Breast epithelium (tissue), 4 donors: ENCODE measurements at regions of chr12 and their contacts with region 1.

Region 1: DNA sequence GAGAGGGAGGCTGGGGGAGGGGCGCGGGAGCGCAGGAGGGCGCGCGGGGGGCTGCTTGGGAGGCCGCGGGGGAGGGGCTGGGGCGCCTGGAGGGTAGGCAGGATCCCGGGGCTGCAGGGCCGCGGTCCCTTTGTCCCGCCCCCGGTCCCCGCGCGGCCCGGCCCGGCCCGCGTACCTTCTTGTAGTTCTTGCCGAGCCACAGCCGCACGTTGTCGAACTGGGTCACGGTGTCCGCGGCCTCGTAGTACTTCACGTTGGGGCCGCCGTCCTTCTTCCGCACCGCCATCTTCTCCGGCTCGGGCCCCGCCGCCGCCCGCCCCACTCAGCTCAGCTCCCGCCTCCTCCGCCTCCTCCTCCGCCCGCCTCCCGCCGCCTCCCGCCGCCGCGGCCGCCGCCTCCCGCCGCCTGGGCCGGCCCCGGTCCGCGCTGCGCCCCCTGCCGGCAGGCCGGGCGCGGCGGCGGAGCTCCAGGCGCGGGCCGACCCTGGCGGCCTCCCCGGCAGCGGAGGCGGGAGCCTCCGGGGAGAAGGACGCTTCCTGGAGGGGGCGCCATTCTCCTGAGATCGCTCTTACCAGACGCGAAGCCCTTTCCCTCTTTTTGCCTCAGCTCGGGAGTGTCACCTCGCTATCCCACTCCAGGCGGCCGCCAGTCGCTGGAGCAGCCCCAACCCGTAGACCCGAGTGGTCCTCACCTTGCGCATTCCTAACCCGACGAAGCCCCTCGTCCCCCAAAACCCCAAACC is at the start of gene SMARCC2:
- DNase-seq: peak; percentile 83 to 88
- H3K4me3 ChIP-seq: peak within 1 kb of the TSS; percentile 78 to 94 (median 92)
- H3K27ac ChIP-seq: peak within 1 kb of the TSS; percentile 93 to 96
- H3K4me1 ChIP-seq: peaks cover 0 to 13% of the 10 kb centered on the region in 2 donors
- H3K27me3 ChIP-seq: no peaks in the 10 kb centered on the region
- CTCF ChIP-seq: peak; percentile 19 to 88 (median 72)
- POLR2A ChIP-seq: no peak
- total RNA-seq, gene SMARCC2: 105 to 114 (median 106) TPM

Region 2: GRCh38 chr12:56127888-56128669 is 61.3 kb before region 1 on chr12 and contains the start of gene ESYT1:
- intact Hi-C with region 1: loop called (anchors 5 kb)
- DNase-seq: peak; percentile 99 to 100
- H3K4me3 ChIP-seq: peak within 1 kb of the TSS; percentile 66 to 89 (median 80)
- H3K27ac ChIP-seq: peak within 1 kb of the TSS; percentile 92 to 94
- H3K4me1 ChIP-seq: peaks cover 3 to 14% of the 10 kb centered on the region in 2 donors
- H3K27me3 ChIP-seq: no peaks in the 10 kb centered on the region
- CTCF ChIP-seq: no peak
- POLR2A ChIP-seq: peak; percentile 71
- total RNA-seq, gene ESYT1: 132 to 243 (median 146) TPM

Region 3: DNA sequence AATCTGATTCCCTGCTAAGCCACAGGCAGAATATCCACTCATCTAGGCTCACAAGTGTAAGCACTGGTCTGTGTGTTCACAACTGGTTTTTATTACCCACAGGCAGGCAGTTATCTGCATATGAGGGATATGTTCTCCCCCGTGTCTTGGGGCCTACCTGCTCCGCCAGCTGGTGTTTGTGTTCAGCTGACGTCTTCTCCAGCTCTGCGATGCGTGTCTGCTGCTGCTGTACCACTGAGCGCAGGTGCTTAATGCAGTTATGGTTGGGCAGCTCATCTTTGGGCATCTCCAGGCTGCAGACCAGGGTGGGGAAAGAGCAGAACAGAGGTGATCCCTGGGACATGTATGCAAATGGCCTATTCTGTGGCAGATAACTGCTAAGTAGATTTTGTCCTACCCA is 18.7 kb after region 1 on chr12:
- intact Hi-C with region 1: loop called (anchors 1 kb)
- DNase-seq: no peak
- H3K4me3 ChIP-seq: no peak overlapping the region
- H3K27ac ChIP-seq: no peak overlapping the region
- H3K4me1 ChIP-seq: no peaks in the 10 kb centered on the region
- H3K27me3 ChIP-seq: no peaks in the 10 kb centered on the region
- CTCF ChIP-seq: no peak
- POLR2A ChIP-seq: no peak

Region 4: GRCh38 chr12:56224102-56224701 is 34.9 kb after region 1 on chr12 and contains the start of gene NABP2:
- intact Hi-C with region 1: loop called (anchors 2 kb)
- DNase-seq: peak; percentile 98
- H3K4me3 ChIP-seq: peak within 1 kb of the TSS; percentile 61 to 81 (median 61)
- H3K27ac ChIP-seq: peak within 1 kb of the TSS; percentile 92 to 95
- H3K4me1 ChIP-seq: peaks cover 0 to 6% of the 10 kb centered on the region in 2 donors
- H3K27me3 ChIP-seq: no peaks in the 10 kb centered on the region
- CTCF ChIP-seq: peak; percentile 79 to 94 (median 90)
- POLR2A ChIP-seq: no peak
- total RNA-seq, gene NABP2: 24.7 to 31.2 (median 27.5) TPM